Activated CD4-positive, alpha-beta T cell treated with anti-CD3 and anti-CD28 coated beads, Interleukin-2, amount 10 ng/mL, durations not matched to agents 24 days and 14 days (primary cell): ENCODE measurements at regions of chr9 and their contacts with region 1.

Region 1: GRCh38 chr9:91422758-91423711 is 597 bp downstream of the NFIL3 start:
- DNase-seq: peak; percentile 89
- H3K4me3 Mint-ChIP-seq: peak overlapping the region; percentile 100
- H3K27ac Mint-ChIP-seq: peak overlapping the region; percentile 98
- H3K4me1 Mint-ChIP-seq: peaks cover 57% of the 10 kb centered on the region
- H3K27me3 Mint-ChIP-seq: no peaks in the 10 kb centered on the region

Region 2: GRCh38 chr9:90964101-90965020 is 458.7 kb before region 1 on chr9:
- intact Hi-C with region 1: loop called (anchors 5 kb)
- DNase-seq: no peak
- H3K4me3 Mint-ChIP-seq: peak overlapping the region; percentile 18
- H3K27ac Mint-ChIP-seq: peak overlapping the region; percentile 25
- H3K4me1 Mint-ChIP-seq: peaks cover 25% of the 10 kb centered on the region
- H3K27me3 Mint-ChIP-seq: peaks cover 2% of the 10 kb centered on the region

Region 3: GRCh38 chr9:91101611-91102168 is 321.3 kb before region 1 on chr9:
- intact Hi-C with region 1: loop called (anchors 1 kb)
- DNase-seq: peak; percentile 97
- H3K4me3 Mint-ChIP-seq: peak overlapping the region; percentile 70
- H3K27ac Mint-ChIP-seq: peak overlapping the region; percentile 89
- H3K4me1 Mint-ChIP-seq: peaks cover 67% of the 10 kb centered on the region
- H3K27me3 Mint-ChIP-seq: no peaks in the 10 kb centered on the region

Region 4: GRCh38 chr9:91207729-91208418 is 215.2 kb before region 1 on chr9:
- intact Hi-C with region 1: loop called (anchors 2 kb)
- DNase-seq: peak; percentile 83
- H3K4me3 Mint-ChIP-seq: peak overlapping the region; percentile 68
- H3K27ac Mint-ChIP-seq: peak overlapping the region; percentile 98
- H3K4me1 Mint-ChIP-seq: peaks cover 46% of the 10 kb centered on the region
- H3K27me3 Mint-ChIP-seq: no peaks in the 10 kb centered on the region

Region 5: GRCh38 chr9:91234510-91234909 is 188.5 kb before region 1 on chr9:
- intact Hi-C with region 1: no loop called
- DNase-seq: no peak
- H3K4me3 Mint-ChIP-seq: no peak overlapping the region
- H3K27ac Mint-ChIP-seq: no peak overlapping the region
- H3K4me1 Mint-ChIP-seq: peaks cover 2% of the 10 kb centered on the region
- H3K27me3 Mint-ChIP-seq: no peaks in the 10 kb centered on the region

Region 6: GRCh38 chr9:91346652-91347051 is 76.4 kb before region 1 on chr9:
- intact Hi-C with region 1: loop called (anchors 1 kb)
- DNase-seq: peak; percentile 69
- H3K4me3 Mint-ChIP-seq: no peak overlapping the region
- H3K27ac Mint-ChIP-seq: peak overlapping the region; percentile 49
- H3K4me1 Mint-ChIP-seq: peaks cover 40% of the 10 kb centered on the region
- H3K27me3 Mint-ChIP-seq: no peaks in the 10 kb centered on the region

Region 7: GRCh38 chr9:91359734-91360470 is 63.1 kb before region 1 on chr9:
- intact Hi-C with region 1: loop called (anchors 1 kb)
- DNase-seq: peak; percentile 74
- H3K4me3 Mint-ChIP-seq: peak overlapping the region; percentile 93
- H3K27ac Mint-ChIP-seq: peak overlapping the region; percentile 99
- H3K4me1 Mint-ChIP-seq: peaks cover 58% of the 10 kb centered on the region
- H3K27me3 Mint-ChIP-seq: no peaks in the 10 kb centered on the region

Region 8: GRCh38 chr9:91474656-91475055 is 51.6 kb after region 1 on chr9:
- intact Hi-C with region 1: no loop called
- DNase-seq: no peak
- H3K4me3 Mint-ChIP-seq: no peak overlapping the region
- H3K27ac Mint-ChIP-seq: no peak overlapping the region
- H3K4me1 Mint-ChIP-seq: no peaks in the 10 kb centered on the region
- H3K27me3 Mint-ChIP-seq: peaks cover 45% of the 10 kb centered on the region

Region 9: GRCh38 chr9:91623004-91623403 is 200.0 kb after region 1 on chr9:
- intact Hi-C with region 1: no loop called
- DNase-seq: no peak
- H3K4me3 Mint-ChIP-seq: no peak overlapping the region
- H3K27ac Mint-ChIP-seq: no peak overlapping the region
- H3K4me1 Mint-ChIP-seq: no peaks in the 10 kb centered on the region
- H3K27me3 Mint-ChIP-seq: peaks cover 41% of the 10 kb centered on the region

Region 10: GRCh38 chr9:91711755-91712601 is 288.9 kb after region 1 on chr9:
- intact Hi-C with region 1: loop called (anchors 5 kb)
- DNase-seq: peak; percentile 90
- H3K4me3 Mint-ChIP-seq: no peak overlapping the region
- H3K27ac Mint-ChIP-seq: no peak overlapping the region
- H3K4me1 Mint-ChIP-seq: peaks cover 4% of the 10 kb centered on the region
- H3K27me3 Mint-ChIP-seq: peaks cover 13% of the 10 kb centered on the region